GM13976 (cell line): ENCODE measurements at regions of chr10 and their contacts with region 1.

Region 1: DNA sequence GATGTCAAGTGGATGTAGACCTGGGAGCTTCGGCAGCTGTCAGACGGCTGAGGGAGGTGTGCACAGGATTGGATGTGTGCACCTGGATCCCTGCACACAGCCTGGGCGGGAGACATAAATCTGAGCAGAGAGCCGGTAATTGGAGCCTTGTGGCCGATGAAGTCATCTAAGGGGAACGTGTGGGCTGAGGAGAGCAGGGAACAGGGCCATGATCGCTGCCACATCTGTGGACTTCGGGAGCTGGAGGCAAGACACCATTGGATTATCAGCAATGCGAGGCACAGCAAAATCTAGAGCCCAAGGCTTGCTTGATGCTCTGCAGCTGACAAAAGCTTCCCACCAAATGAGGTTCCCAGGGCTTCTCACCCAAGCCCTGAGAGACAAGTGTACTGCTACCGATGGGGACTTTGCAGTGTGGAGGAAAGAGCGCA is 147.7 kb downstream of the PTPN20 start:
- DNase-seq: no peak
- CTCF ChIP-seq: no peak

Region 2: DNA sequence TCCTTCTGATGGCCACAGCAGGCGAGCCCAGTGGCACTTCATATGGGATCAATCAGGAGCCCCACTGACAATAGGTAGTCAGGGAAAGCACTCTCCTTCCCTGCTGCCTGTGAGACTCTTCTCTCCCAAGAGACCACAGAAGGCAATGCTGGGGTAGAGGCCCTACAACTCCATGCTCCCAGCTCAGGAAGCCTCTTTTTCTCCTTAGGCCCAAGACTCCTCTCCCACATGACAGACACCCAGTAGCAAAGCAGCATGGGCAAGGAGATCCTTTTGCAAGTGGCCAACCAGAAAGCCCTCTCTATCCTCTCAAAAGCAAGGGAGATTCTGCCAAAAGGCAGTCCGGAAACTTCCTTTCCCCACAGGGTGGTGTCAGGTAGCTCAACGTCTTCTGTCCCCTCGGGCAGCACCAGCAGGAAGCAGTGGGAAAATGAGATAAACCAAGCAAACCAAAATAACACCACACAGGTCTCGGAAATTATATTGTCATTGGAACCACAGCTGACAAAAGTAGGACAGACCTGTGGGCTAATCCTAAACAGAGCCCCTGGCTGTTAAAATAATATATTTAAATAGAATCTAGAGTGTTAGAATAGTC is 68.3 kb after region 1 on chr10:
- in situ Hi-C with region 1: no loop called
- DNase-seq: no peak
- CTCF ChIP-seq: no peak

Region 3: GRCh38 chr10:47309403-47310089 is 250.6 kb after region 1 on chr10:
- in situ Hi-C with region 1: loop called (anchors 10 kb)
- DNase-seq: no peak
- CTCF ChIP-seq: no peak